Activated T-helper 2 cell treated with anti-CD3 and anti-CD28 coated beads, Interferon-gamma antibody, Interleukin-2, Interleukin-4, amounts not matched to agents 10 μg/mL and 5 μg/mL and 100 μg/mL, durations not matched to agents 14 hours and 24 hours and 36 hours (primary cell): ENCODE measurements at regions of chr16 and their contacts with region 1.

Region 1: DNA sequence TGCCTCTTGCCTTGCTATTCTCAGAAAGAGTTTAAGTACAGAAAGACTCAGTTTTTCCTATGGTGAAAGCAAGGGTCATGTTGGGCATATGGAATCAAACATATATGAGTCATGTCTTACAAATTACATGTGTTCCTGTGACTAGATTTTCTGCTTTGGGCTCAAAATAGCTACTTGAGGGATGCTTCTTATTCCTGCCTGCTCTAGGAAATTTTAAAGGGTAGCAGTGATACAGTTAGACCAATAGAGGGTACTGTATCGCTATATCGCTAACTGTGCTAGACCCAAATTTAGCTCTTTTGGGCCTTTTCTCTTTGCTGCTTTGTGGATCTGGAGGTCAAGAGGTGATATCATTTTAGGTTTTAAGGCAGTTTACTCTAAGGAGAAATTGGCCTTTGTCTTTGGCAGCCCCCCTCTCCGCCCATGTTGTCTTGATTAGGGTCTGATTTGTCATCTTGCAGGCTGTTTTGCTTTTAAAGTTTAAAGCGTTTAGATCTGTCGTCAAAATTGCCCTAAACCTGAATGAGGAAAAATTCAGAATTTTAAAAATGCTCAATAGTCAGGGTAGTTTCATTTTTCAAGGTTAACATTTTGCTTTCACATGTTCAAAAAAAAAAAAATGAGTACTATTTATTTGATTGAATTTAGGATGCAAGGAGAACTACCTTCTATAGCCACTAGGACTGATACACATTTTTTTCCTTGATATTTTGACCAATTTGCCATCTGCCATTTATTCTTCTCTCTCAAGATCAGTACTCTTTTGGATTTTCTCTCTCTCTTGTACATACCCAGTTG is 8.8 kb downstream of the NFATC3 start:
- DNase-seq: no peak
- H3K4me3 Mint-ChIP-seq: peak overlapping the region; percentile 49
- H3K27ac Mint-ChIP-seq: peak overlapping the region; percentile 80
- H3K4me1 Mint-ChIP-seq: peaks cover 67% of the 10 kb centered on the region
- H3K27me3 Mint-ChIP-seq: no peaks in the 10 kb centered on the region

Region 2: DNA sequence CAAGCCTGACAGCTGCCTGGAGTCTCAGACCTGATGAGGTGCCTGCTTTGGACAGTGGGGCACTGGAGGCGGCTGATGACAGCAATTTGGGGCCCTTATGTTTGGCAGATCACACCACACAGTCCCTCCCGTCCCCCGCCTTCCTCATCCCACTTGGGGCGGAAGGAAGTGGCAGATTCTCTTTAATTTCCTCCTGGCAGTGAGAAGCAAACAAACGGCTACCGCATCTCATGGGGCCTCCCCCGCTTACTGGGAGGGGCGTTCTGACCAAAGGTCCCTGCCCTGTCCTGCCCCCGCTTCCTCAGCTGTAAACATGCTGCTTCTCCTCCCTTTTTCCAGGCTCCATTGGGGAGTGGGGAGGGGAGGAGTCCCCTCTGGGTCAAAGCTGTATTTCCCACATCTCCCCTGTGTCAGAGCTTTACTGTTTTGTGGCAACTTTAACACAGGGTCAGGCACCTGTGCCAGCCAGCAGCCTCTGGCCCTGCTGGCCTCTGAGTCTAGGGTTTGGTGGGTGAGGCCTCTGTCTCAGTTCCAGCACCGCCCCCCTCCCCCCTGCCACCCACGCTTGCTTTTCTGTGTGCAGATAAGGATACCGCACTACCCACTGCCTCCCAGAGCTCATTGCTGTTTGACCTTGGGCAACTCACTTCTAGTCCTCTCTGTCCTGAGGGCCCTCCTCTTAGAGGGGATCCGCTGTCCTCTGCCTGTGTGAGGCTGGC is 14.2 kb before region 1 on chr16:
- intact Hi-C with region 1: loop called (anchors 2 kb)
- DNase-seq: peak; percentile 79
- H3K4me3 Mint-ChIP-seq: peak overlapping the region; percentile 51
- H3K27ac Mint-ChIP-seq: peak overlapping the region; percentile 96
- H3K4me1 Mint-ChIP-seq: peaks cover 84% of the 10 kb centered on the region
- H3K27me3 Mint-ChIP-seq: no peaks in the 10 kb centered on the region

Region 3: GRCh38 chr16:68116256-68116867 is 22.3 kb after region 1 on chr16:
- intact Hi-C with region 1: loop called (anchors 2 kb)
- DNase-seq: no peak
- H3K4me3 Mint-ChIP-seq: no peak overlapping the region
- H3K27ac Mint-ChIP-seq: peak overlapping the region; percentile 35
- H3K4me1 Mint-ChIP-seq: peaks cover 63% of the 10 kb centered on the region
- H3K27me3 Mint-ChIP-seq: no peaks in the 10 kb centered on the region

Region 4: GRCh38 chr16:68146585-68146984 is 52.6 kb after region 1 on chr16:
- intact Hi-C with region 1: loop called (anchors 2 kb)
- DNase-seq: no peak
- H3K4me3 Mint-ChIP-seq: no peak overlapping the region
- H3K27ac Mint-ChIP-seq: no peak overlapping the region
- H3K4me1 Mint-ChIP-seq: peaks cover 34% of the 10 kb centered on the region
- H3K27me3 Mint-ChIP-seq: no peaks in the 10 kb centered on the region

Region 5: DNA sequence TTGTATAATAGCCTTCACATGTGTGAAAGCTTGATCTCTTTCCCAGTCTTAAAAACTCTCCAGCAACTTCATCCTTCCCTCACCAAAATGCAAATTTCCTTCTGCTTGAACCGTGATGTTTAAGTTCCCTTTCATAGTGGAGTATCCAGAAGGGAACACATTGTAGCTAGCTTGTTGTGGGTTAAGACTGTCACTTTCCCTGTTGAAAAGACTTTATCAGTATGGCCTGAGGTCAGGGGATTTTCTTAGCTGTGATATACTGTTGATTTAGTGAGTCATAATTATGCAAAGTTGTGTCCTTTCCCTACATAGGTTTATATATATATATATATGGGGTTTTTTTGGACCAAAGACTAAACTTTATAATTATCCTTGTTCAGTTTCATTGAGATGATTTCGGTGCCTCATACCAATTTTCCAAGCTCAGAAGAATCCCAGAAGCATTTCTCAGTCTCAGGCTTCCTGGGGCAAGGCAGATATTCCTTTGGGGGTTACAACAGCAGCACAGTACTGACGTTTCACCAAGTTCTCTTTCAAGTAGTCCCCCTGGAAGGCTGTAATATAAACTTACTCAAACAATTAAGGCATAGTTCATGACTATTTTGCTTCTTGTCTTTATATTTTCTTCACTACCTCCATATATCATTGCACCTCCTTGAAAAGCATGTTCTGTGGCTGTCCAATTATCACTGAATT is 106.2 kb after region 1 on chr16:
- intact Hi-C with region 1: loop called (anchors 5 kb)
- DNase-seq: no peak
- H3K4me3 Mint-ChIP-seq: no peak overlapping the region
- H3K27ac Mint-ChIP-seq: peak overlapping the region; percentile 62
- H3K4me1 Mint-ChIP-seq: peaks cover 15% of the 10 kb centered on the region
- H3K27me3 Mint-ChIP-seq: no peaks in the 10 kb centered on the region

Region 6: DNA sequence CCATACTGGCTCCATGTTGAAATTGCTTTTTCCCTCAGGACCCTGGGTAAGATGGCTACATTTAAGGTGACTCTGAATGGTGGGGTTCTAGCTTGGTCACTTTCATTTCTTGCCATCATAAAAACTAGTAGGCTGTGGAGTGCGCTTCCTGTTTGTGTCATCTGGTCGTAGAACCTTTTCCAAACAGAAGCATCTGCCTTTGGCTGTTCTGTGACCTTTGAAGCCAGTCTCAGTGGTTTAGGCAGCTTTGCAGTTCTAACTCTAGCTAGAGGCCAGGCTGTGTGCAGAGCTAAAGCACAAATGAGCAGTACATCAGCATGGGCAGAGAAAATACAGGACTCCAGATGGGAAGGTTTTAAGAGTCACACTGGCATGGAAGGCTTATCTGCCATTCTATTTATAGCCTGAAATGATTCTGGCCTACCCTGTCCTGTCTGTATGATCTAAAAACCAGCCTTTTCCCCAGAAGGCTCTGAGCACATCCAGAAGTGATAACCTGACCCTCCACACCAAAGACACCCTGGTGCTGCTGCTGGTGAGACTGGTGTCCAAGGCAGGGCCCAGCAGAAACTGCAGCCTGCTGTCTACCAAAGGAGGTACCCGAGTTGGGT is 133.3 kb after region 1 on chr16:
- intact Hi-C with region 1: loop called (anchors 1 kb)
- DNase-seq: no peak
- H3K4me3 Mint-ChIP-seq: peak overlapping the region; percentile 22
- H3K27ac Mint-ChIP-seq: peak overlapping the region; percentile 85
- H3K4me1 Mint-ChIP-seq: peaks cover 39% of the 10 kb centered on the region
- H3K27me3 Mint-ChIP-seq: no peaks in the 10 kb centered on the region

Region 7: DNA sequence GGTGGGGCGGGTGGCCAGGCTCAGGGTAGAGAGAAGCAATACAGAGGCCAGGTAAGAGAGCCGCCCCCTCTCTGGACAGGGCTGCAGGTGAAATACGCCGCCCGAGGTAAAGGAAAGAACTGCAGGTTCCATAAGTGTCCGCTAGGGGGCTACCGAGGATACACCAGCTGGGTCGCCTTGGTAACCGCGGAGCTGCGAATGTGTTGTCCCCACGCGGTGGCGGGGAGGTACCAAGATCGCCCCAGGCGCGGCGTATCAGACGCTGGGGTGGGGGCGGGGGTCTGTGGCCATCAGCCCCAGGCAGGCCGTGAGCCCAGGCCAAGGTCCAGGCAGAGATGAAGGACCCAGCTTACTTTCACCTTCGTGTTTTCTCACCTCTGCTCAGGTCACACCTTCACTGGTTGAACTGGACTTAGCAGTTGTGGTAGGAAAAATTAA is 426.7 kb after region 1 on chr16:
- intact Hi-C with region 1: no loop called
- DNase-seq: peak; percentile 84
- H3K4me3 Mint-ChIP-seq: peak overlapping the region; percentile 21
- H3K27ac Mint-ChIP-seq: no peak overlapping the region
- H3K4me1 Mint-ChIP-seq: peaks cover 5% of the 10 kb centered on the region
- H3K27me3 Mint-ChIP-seq: peaks cover 5% of the 10 kb centered on the region